IMR-90 (cell line): ENCODE measurements at regions of chr15 and their contacts with region 1.

Region 1: DNA sequence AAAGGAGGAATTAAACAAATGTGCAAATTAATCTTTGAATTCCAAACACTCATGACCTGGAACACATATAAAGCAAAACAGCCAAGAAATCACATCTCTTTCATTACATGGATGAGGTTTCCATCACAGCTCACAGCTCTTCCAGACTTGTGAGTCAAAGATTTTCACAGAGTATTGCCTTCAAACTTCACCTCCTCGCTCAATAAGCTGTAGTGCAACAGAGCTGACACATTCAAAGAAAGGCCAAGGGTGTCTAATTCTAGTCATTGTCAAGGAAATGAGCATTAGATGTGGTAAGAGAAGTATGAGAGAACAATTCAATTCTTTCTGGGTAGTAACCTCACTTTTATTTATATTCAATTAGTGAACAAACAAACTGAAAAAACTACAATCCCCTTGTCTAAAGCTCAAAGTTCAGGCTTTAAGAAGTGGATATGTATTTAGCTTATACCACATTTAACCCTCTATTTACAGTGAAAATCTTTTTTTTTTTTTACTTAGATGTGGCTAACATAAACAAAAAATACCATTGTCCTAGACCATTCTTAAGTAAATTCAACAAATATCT is 11.9 kb downstream of the WDR72 start:
- DNase-seq: no peak
- ATAC-seq: no peak
- H3K4me3 ChIP-seq: no peak overlapping the region
- H3K27ac ChIP-seq: no peak overlapping the region
- H3K4me1 ChIP-seq: no peaks in the 10 kb centered on the region
- H3K27me3 ChIP-seq: no peaks in the 10 kb centered on the region
- CTCF ChIP-seq: no peak
- POLR2A ChIP-seq: no peak
- RAD21 ChIP-seq: no peak

Region 2: DNA sequence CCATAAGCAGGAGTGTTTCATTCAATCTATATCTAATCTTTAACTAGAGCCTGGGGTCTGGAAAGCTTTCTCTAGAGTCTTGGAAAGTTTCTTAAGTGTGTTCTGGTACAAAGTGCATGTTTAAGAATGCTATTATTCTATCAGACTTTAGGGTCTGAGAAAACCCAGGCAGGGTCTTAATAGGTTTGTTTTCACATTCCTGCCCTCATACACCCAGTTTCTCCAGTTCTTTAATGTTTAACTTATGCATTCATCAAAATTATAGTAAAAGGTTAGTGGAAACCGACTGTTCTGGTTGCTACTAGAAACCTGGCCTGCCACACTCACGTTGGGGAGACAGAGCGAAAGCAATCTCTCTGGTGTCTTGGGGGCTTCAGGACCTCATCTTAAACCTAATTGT is 114.8 kb after region 1 on chr15:
- CTCF ChIA-PET with region 1: no interaction called
- POLR2A ChIA-PET with region 1: no interaction called
- dilution Hi-C with region 1: no loop called
- in situ Hi-C with region 1: no loop called
- intact Hi-C with region 1: no loop called
- DNase-seq: no peak
- ATAC-seq: no peak
- H3K4me3 ChIP-seq: no peak overlapping the region
- H3K27ac ChIP-seq: no peak overlapping the region
- H3K4me1 ChIP-seq: no peaks in the 10 kb centered on the region
- H3K27me3 ChIP-seq: no peaks in the 10 kb centered on the region
- CTCF ChIP-seq: no peak
- POLR2A ChIP-seq: no peak
- RAD21 ChIP-seq: no peak

Region 3: GRCh38 chr15:54675241-54675640 is 927.7 kb after region 1 on chr15:
- CTCF ChIA-PET with region 1: interaction called, 10 read pairs
- POLR2A ChIA-PET with region 1: no interaction called
- dilution Hi-C with region 1: no loop called
- in situ Hi-C with region 1: no loop called
- intact Hi-C with region 1: no loop called
- DNase-seq: no peak
- ATAC-seq: no peak
- H3K4me3 ChIP-seq: no peak overlapping the region
- H3K27ac ChIP-seq: no peak overlapping the region
- H3K4me1 ChIP-seq: no peaks in the 10 kb centered on the region
- H3K27me3 ChIP-seq: no peaks in the 10 kb centered on the region
- CTCF ChIP-seq: no peak
- POLR2A ChIP-seq: no peak
- RAD21 ChIP-seq: no peak

Region 4: DNA sequence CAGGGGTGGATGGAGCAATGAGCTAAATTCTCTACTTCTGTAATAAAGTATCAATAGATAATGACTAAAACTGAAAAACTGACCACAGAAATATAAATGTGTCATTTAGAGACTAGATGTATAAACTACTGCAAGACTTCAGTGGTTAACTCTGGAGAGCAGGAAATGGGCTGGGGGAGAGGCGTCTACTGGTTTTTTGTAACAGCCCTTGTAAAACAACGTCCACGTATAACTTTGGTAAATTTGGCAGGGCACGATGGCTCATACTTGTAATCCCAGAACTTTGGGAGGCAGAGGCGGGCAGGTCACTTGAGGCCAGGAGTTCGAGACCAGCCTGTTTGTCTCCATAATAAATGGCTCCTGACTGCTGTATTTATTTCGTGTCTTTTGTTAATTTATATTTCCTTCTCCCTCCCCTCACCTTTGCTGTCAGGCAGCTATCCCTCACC is 1529.6 kb after region 1 on chr15:
- CTCF ChIA-PET with region 1: no interaction called
- POLR2A ChIA-PET with region 1: no interaction called
- dilution Hi-C with region 1: no loop called
- in situ Hi-C with region 1: no loop called
- intact Hi-C with region 1: no loop called
- DNase-seq: peak; percentile 82
- ATAC-seq: no peak; the same call in 1 of the 2 replicates
- H3K4me3 ChIP-seq: no peak overlapping the region
- H3K27ac ChIP-seq: no peak overlapping the region
- H3K4me1 ChIP-seq: peaks cover 6% of the 10 kb centered on the region; the same call in 1 of the 2 replicates
- H3K27me3 ChIP-seq: no peaks in the 10 kb centered on the region
- CTCF ChIP-seq: no peak
- POLR2A ChIP-seq: no peak
- RAD21 ChIP-seq: no peak